GM10248 (cell line): ENCODE measurements at regions of chr18 and their contacts with region 1.

Region 1: DNA sequence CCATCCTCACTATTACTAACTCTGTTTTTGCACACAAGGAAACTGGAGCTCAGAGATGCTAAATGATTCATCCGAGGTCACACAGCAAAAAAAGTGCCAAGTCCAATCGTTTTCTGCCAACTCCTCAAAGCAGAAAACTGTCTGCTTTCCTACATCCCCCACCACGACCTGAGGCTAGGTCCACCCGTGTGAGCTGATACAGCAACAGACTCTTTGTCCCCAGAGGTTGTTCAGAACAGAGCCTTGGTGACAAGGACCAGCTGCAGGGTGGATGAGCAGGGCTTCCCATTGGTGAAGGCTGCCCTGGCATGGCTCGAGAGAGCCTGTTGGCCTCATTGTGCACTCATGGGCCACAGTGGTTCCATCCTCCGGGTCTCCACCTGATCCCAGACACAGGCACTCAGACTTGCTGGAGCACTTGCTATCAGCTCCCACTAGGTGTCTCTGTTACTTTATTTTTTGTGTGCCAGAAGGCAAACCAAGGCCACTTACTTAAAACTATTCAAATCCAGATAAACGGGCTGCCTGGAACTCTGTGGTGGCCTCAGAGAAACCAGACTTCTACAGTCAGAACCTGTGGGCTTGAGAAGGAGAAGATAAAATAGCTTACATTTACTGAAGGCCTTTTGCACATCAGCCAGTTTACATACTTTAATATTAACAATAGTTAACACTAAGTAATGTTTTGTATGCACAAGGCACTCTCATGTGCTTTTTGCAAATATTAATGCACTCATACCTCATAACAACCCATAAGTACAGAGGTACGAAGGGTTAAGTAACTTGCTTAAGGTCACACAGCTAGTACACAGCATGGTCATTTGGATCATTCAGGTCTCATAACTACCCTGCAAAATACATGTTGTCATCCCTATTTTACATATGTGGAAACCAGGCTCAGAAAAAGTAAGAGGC is 62.9 kb upstream of the CTIF start:
- DNase-seq: peak; percentile 70
- CTCF ChIP-seq: peak; percentile 74

Region 2: GRCh38 chr18:48486754-48487153 is 10.9 kb after region 1 on chr18:
- CTCF ChIA-PET with region 1: interaction called, 16 read pairs
- POLR2A ChIA-PET with region 1: no interaction called
- DNase-seq: no peak
- CTCF ChIP-seq: no peak

Region 3: DNA sequence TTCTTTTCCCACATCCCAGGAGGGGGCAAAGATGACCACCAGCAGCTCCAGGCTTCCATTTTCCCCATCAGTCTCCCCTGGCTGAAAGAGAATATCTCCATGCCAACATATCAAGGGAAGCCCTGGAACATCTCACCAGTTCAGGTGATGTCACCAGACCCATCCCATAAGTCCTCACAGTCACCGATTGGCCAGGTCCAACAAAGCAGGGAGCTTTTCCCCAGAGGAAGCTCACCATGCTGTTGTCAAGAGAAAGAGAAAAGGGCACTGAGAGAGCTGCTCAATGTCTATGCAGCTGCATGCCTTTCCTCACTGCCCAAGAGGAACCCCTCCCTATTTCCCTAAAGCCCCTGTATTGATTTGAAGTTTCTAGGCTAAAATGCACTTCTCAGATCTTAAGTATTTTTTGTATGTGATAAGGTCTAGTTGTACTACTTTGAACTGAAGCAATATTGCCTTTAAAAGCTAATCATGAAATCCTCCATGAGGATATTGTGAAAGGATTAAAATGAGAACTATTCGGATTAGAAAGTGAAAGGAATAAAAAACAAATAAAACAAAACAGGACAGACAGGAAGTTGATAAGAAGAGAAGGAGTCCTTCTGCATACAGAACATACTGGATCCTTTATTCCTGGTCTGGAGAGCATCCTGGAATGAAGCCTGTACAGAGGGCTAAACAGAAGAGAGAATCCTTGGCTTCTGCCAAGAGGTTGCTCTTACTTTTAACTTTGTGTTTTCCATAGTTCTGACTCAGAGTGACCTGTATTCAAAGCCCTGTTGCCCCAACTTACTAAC is 17.7 kb after region 1 on chr18:
- CTCF ChIA-PET with region 1: interaction called, 16 read pairs
- POLR2A ChIA-PET with region 1: no interaction called
- DNase-seq: no peak
- CTCF ChIP-seq: no peak

Region 4: GRCh38 chr18:48663931-48664847 is 188.3 kb after region 1 on chr18:
- CTCF ChIA-PET with region 1: interaction called, 35 read pairs
- POLR2A ChIA-PET with region 1: no interaction called
- DNase-seq: peak; percentile 79
- CTCF ChIP-seq: peak; percentile 78